RWPE1 (cell line): ENCODE measurements at regions of chr6 and their contacts with region 1.

Region 1: DNA sequence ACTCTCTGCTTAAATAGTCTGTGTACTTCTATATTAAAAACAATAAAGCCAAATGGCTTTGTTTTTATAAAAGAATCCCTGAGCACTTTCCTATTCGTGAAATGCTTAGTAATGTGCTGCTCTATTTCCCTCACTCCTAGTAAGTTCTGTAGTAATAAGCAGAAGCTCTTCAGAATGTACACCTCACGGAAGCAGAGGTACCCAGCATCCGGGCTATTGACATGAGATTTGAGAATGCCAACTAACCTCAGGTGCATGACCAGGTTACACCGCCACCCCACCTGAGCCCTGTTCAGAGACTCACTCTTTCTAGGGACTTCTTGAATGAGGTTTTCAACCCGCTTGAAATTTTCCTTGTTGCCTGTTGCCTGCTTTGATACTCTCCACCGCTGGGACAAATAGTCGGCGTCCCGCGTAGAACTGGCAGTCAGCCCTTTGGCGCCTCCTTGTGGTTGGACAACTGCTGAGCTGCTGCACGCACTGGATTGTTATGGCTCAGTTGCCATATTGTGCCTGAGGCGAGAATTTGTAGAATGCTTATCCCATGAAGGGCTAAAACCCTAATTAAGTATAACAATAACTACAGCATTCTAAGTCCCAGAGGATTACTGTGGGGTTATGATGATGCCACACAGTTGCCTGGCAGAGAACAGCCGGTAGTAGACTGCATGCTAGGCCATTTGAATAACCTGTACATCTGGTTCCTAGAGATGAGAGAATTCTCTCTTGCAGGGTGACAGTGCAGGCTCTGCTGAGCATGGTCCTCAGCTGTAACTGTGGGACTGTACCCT is 95.4 kb downstream of the KHDC1L start:
- DNase-seq: peak; percentile 75
- H3K27ac ChIP-seq: no peak overlapping the region
- CTCF ChIP-seq: peak; percentile 96

Region 2: GRCh38 chr6:72616406-72617015 is 513.3 kb before region 1 on chr6:
- CTCF ChIA-PET with region 1: interaction called, 48 read pairs
- POLR2A ChIA-PET with region 1: no interaction called
- DNase-seq: no peak
- H3K27ac ChIP-seq: no peak overlapping the region
- CTCF ChIP-seq: peak; percentile 78

Region 3: DNA sequence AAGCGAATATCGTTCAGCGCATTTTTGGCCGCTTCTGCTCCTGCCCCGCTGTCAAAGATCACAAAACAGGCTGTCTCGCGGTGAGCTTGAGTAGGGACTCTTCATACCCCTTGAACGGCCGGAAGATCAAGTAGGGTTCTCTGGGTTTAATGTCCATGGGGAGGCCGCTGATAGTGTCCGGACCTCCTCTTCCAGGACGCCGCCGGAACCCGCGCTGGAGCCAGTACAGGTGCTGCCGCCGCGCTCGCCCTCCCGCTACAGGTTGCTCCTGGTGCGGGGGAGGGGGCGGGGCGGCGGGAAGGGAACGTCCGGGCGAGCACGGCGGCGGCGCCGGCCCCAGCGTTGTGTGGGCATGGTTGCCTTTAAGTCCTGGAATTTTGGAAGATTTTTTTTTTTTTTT is 28.0 kb after region 1 on chr6:
- CTCF ChIA-PET with region 1: no interaction called
- POLR2A ChIA-PET with region 1: no interaction called
- DNase-seq: no peak
- H3K27ac ChIP-seq: no peak overlapping the region
- CTCF ChIP-seq: no peak

Region 4: DNA sequence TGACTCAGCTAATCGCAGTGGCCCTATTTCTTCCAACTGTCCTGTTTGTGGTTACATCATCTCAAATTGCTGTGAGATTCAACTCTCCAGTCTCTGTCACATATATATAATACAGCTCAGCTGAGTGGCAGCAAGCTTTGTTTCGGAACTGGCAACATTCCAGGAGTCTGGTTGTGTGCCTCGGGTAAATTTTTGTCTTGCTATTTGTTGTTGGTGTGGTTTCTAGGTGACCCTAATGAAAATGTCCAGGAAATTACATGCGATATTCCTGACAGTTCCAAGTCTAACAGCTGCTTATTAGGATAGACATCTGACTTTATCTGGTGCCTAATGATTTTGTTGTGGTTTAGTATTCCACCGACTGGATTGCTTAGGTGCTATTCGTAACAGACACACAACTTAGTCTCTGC is 1147.9 kb after region 1 on chr6:
- CTCF ChIA-PET with region 1: no interaction called
- POLR2A ChIA-PET with region 1: no interaction called
- DNase-seq: no peak
- H3K27ac ChIP-seq: no peak overlapping the region
- CTCF ChIP-seq: no peak